Activated CD4-positive, alpha-beta memory T cell treated with anti-CD3 and anti-CD28 coated beads, Interleukin-2, amount 10 ng/mL, durations not matched to agents 7 days and 5 days (primary cell): ENCODE measurements at regions of chr5 and their contacts with region 1.

Region 1: GRCh38 chr5:80083101-80083890 is 48.1 kb downstream of the THBS4 start:
- DNase-seq: peak; percentile 31
- H3K4me3 Mint-ChIP-seq: peak overlapping the region; percentile 56
- H3K27ac Mint-ChIP-seq: peak overlapping the region; percentile 64
- H3K4me1 Mint-ChIP-seq: peaks cover 16% of the 10 kb centered on the region
- H3K27me3 Mint-ChIP-seq: no peaks in the 10 kb centered on the region

Region 2: DNA sequence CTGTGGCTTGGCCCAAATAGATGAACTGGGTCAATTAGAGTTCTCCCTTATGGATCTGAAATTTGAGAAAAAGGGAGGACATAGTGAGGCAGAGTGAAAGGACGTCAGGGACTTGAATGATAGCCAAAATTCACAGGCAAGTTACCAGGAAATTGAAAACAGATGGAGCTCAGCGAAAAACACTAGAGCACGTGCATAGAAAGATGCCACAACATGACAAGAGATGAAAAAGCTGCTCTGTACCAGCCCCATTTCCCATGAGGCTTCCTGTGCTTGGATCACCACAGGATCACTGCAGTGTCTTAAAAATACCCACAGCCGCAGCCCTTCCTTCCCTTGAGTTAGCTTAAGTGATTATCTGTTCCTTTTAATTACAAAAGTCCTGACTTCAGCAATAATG is 530.3 kb before region 1 on chr5:
- CTCF ChIA-PET with region 1: interaction called, 10 read pairs
- POLR2A ChIA-PET with region 1: no interaction called
- DNase-seq: no peak
- H3K4me3 Mint-ChIP-seq: no peak overlapping the region
- H3K27ac Mint-ChIP-seq: no peak overlapping the region
- H3K4me1 Mint-ChIP-seq: peaks cover 19% of the 10 kb centered on the region
- H3K27me3 Mint-ChIP-seq: no peaks in the 10 kb centered on the region

Region 3: DNA sequence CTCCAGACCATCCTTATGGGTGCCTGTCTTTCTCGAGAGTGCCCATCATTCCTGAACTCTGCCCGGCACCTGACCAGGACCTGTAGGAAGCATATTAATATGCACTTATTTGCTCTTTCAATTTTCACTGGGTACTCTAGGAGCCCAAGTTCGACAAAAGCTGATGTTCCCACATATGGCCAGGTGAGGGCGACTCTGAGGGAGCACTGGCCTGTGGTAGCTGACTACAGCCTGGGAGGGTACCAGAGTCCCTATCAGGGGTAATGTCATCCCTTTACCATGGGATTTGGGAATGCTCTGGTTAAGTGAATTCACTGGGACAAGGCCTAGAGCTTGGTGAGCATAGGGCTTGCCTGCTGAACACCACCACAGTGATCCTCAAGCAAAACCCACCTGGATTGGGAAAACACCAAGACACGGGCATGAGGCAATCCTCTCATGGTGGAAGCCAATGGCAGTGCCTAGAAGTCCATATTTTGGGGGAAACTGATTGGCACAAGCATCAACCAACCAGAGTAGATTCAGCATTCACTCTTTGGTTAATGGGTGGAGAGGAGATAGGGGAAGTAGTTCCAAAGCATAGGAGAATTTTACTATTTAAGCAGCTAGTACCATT is 204.5 kb before region 1 on chr5:
- CTCF ChIA-PET with region 1: interaction called, 43 read pairs
- POLR2A ChIA-PET with region 1: no interaction called
- DNase-seq: peak; percentile 48
- H3K4me3 Mint-ChIP-seq: no peak overlapping the region
- H3K27ac Mint-ChIP-seq: no peak overlapping the region
- H3K4me1 Mint-ChIP-seq: no peaks in the 10 kb centered on the region
- H3K27me3 Mint-ChIP-seq: peaks cover 5% of the 10 kb centered on the region

Region 4: GRCh38 chr5:79924936-79925893 is 158.1 kb before region 1 on chr5:
- CTCF ChIA-PET with region 1: interaction called, 37 read pairs
- POLR2A ChIA-PET with region 1: interaction called, 7 read pairs
- DNase-seq: peak; percentile 25
- H3K4me3 Mint-ChIP-seq: no peak overlapping the region
- H3K27ac Mint-ChIP-seq: no peak overlapping the region
- H3K4me1 Mint-ChIP-seq: peaks cover 17% of the 10 kb centered on the region
- H3K27me3 Mint-ChIP-seq: peaks cover 7% of the 10 kb centered on the region

Region 5: DNA sequence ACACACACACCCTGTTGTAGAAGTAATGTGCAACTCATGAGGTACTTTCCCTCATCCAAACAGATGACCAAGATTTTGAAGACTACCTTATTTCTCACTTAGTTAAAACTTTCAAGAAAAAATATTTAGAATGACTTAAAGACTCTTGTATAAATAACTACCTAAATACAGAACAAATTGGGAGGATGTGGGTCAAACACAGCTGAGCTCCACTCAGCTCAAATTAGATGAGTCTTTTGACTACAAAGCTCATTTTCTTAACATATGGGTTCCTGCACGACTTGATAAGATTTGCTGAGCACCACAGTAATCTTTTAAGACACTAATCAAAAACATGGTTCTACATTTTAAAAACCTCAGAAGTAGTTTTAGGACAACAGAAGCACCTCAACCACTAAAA is 101.2 kb before region 1 on chr5:
- CTCF ChIA-PET with region 1: interaction called, 12 read pairs
- POLR2A ChIA-PET with region 1: interaction called, 3 read pairs
- DNase-seq: no peak
- H3K4me3 Mint-ChIP-seq: no peak overlapping the region
- H3K27ac Mint-ChIP-seq: peak overlapping the region; percentile 76
- H3K4me1 Mint-ChIP-seq: peaks cover 60% of the 10 kb centered on the region
- H3K27me3 Mint-ChIP-seq: no peaks in the 10 kb centered on the region

Region 6: DNA sequence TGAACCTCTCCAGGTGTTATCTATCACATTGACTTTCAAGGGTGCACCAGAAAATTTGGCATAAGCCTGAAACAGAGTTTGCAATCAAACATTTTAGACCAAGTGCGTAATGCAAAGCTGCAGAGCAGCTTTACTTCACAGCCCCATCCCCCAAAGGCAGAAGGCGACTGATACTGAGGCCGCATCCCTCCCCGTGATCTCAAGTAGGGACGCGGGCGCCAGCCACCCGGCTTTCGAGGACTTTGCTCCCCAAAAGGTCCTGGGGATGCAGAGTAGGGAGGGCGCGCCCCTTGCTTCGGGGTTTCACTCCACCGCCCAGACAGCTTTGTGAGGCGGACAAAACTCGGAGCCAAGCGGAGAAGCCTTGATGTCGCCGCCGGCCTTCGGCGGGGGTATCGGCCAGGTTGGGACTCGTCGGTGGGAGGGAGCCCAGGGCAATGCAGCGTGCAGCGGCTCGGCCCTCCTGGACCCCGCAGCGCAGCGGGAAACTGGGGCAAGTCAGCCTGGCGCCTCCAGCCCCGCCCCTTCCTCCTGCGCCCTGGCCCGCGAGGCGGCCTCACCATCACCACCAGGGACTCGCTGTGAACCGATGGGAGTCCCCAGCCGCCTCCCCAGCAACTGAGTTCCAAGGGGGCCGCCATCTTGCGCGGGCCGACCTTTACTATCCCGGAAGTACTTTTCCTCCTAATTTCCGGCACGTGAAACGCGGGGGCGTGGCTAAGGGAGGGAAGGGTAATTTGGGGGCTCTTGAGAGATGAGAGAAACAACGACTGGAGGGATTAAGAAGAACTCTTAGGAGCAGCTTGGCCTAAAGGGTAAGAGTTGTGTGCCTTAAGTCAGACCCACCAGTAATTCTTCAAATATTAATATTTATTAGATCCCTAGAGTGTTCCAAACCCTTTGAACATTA is 92.4 kb before region 1 on chr5 and contains the start of gene MTX3:
- CTCF ChIA-PET with region 1: interaction called, 17 read pairs
- POLR2A ChIA-PET with region 1: interaction called, 7 read pairs
- DNase-seq: peak; percentile 91
- H3K4me3 Mint-ChIP-seq: peak within 1 kb of the TSS; percentile 90
- H3K27ac Mint-ChIP-seq: peak within 1 kb of the TSS; percentile 99
- H3K4me1 Mint-ChIP-seq: peaks cover 54% of the 10 kb centered on the region
- H3K27me3 Mint-ChIP-seq: no peaks in the 10 kb centered on the region
- total RNA-seq, gene MTX3: 22.8 TPM

Region 7: GRCh38 chr5:80308526-80308925 is 225.2 kb after region 1 on chr5:
- CTCF ChIA-PET with region 1: interaction called, 199 read pairs
- POLR2A ChIA-PET with region 1: no interaction called
- DNase-seq: no peak
- H3K4me3 Mint-ChIP-seq: no peak overlapping the region
- H3K27ac Mint-ChIP-seq: no peak overlapping the region
- H3K4me1 Mint-ChIP-seq: no peaks in the 10 kb centered on the region
- H3K27me3 Mint-ChIP-seq: peaks cover 1% of the 10 kb centered on the region

Region 8: DNA sequence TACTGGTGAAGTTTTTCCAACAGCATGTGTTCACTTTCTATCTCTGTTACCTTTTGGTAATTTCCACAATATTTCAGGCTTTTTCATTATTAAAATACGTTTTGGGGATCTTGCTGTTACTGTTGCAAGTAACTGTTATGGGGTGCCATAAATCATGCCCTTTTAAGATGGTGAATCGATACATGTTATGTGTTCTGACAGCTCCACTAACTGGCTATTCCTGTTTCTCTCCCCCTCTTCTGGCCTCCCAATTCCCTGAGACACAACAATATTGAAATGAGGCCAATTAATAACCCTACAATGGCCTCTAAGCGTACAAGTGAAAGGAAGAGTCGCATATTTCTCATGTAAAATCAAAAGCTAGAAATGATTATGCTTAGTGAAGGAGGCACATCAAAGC is 558.1 kb after region 1 on chr5:
- CTCF ChIA-PET with region 1: no interaction called
- POLR2A ChIA-PET with region 1: no interaction called
- DNase-seq: no peak
- H3K4me3 Mint-ChIP-seq: no peak overlapping the region
- H3K27ac Mint-ChIP-seq: no peak overlapping the region
- H3K4me1 Mint-ChIP-seq: peaks cover 22% of the 10 kb centered on the region
- H3K27me3 Mint-ChIP-seq: no peaks in the 10 kb centered on the region